ENCODE measurements at regions of chr12 and their contacts with region 1.

Region 1: GRCh38 chr12:53414756-53415417 is 8.8 kb upstream of the AMHR2 start:
- DNase-seq: no peak
- ATAC-seq: no peak
- H3K4me3 Mint-ChIP-seq: no peak overlapping the region
- H3K27ac Mint-ChIP-seq: no peak overlapping the region
- H3K4me1 Mint-ChIP-seq: peaks cover 66% of the 10 kb centered on the region
- H3K27me3 Mint-ChIP-seq: no peaks in the 10 kb centered on the region

Region 2: DNA sequence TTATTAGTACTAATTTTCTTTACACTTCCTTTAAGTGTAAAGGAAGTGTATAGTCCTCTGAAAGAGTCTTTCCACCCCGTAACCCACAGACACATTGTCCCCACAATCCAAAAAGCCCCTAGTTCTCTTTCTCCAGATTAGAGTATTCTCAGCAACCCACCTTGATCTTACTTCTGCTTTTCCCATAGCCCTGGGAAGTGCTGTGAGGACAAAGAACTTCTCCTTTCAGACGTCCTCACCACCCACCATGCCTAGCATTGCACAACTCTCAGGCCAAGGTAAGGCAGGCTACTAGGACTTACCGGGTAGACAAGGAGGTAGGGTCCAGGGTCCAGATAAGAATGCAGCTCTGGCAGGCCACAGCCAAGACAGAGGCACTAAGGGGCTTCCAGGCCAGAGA is 100.9 kb before region 1 on chr12:
- CTCF ChIA-PET with region 1: no interaction called
- POLR2A ChIA-PET with region 1: no interaction called
- intact Hi-C with region 1: no loop called
- DNase-seq: no peak
- ATAC-seq: no peak
- H3K4me3 Mint-ChIP-seq: no peak overlapping the region
- H3K27ac Mint-ChIP-seq: peak overlapping the region; percentile 19
- H3K4me1 Mint-ChIP-seq: peaks cover 4% of the 10 kb centered on the region
- H3K27me3 Mint-ChIP-seq: no peaks in the 10 kb centered on the region

Region 3: GRCh38 chr12:53391729-53392128 is 23.2 kb before region 1 on chr12:
- CTCF ChIA-PET with region 1: interaction called, 3 read pairs
- POLR2A ChIA-PET with region 1: interaction called, 3 read pairs
- intact Hi-C with region 1: loop called in 1 of 2 experiments (anchors 2 kb)
- DNase-seq: no peak
- ATAC-seq: no peak
- H3K4me3 Mint-ChIP-seq: no peak overlapping the region
- H3K27ac Mint-ChIP-seq: no peak overlapping the region
- H3K4me1 Mint-ChIP-seq: peaks cover 48% of the 10 kb centered on the region
- H3K27me3 Mint-ChIP-seq: no peaks in the 10 kb centered on the region

Region 4: GRCh38 chr12:54240971-54241588 is 826.2 kb after region 1 on chr12:
- CTCF ChIA-PET with region 1: no interaction called
- POLR2A ChIA-PET with region 1: interaction called, 16 read pairs
- intact Hi-C with region 1: no loop called
- DNase-seq: no peak
- ATAC-seq: peak; percentile 85
- H3K4me3 Mint-ChIP-seq: no peak overlapping the region
- H3K27ac Mint-ChIP-seq: peak overlapping the region; percentile 55
- H3K4me1 Mint-ChIP-seq: peaks cover 10% of the 10 kb centered on the region
- H3K27me3 Mint-ChIP-seq: no peaks in the 10 kb centered on the region

Measured in activated CD4-positive, alpha-beta T cell treated with anti-CD3 and anti-CD28 coated beads for 36 hours (primary cell).